HAP-1 (cell line): ENCODE measurements at regions of chr22 and their contacts with region 1.

Region 1: DNA sequence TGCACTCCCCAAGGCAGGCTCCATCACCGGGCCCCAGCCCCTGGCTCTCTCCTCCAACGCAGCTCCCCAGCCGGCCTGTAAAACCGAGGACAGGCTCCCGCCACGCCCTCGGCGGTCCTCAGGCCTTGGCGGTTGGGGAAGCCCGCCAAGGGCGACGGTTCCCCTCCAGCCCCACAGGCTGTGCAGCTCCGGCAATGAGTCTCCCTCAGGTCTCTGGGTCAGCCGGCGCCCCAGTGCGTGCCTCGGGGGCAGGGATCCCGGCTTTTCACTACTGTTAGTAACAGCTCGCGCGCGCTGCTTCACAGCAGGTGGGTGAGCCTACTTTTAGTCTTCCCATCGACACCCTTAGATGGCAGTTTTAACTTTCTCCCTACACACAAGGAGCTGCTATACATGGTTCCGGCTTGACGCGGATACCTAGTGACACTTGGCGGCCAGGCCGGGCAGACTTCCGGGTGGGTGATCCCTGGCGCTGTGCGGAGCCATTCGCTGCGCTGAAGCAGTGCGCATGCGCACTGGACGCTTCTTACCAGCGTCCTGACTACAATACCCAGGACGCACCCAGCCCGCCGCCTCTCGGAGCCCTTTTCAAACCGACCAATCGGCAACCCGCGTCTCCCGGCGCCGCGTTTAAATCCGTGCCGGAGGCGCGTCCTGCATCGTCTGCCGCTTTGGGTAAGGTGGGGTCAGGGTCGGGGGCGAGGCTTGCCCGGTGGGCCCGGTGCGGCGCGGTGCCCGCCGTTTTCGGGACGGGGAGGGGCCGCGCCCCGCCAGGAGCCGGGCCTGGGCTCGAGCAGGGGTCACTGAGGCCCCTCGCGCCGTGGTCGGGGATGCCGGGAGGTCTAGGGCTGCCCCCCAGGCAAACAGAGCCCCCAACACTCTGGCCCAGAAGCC is at the start of gene GTSE1:
- DNase-seq: peak; percentile 96 to 98
- H3K4me3 ChIP-seq: peak within 1 kb of the TSS; percentile 82
- H3K4me1 ChIP-seq: peaks cover 23% of the 10 kb centered on the region
- H3K27me3 ChIP-seq: no peaks in the 10 kb centered on the region

Region 2: DNA sequence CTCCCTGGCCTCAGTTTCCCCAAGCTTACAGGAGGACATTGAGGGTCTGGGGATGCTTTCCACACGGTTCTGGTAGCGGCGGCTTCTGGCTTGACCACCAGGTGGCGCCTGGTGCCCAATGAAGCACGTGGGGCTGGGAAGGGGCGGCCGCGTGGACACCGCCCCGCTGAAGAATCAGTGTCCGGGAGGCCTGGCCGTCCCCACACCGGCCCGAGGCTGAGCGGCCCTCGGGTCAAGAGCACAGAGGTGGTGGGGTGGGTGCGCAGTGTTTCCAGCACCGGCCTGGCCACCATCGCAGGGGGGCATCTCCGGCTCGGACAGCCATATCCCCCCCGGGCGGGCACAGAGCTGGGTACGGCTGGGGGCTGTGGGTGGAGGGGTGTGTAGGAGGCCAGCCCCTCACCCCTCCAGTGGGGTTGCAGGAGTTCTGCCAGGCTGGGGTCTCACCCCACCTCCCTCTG is 174.0 kb before region 1 on chr22:
- in situ Hi-C with region 1: loop called (anchors 10 kb)
- DNase-seq: peak; percentile 33 to 88
- H3K4me3 ChIP-seq: no peak overlapping the region
- H3K4me1 ChIP-seq: no peaks in the 10 kb centered on the region
- H3K27me3 ChIP-seq: no peaks in the 10 kb centered on the region

Region 3: GRCh38 chr22:46471901-46472721 is 175.6 kb after region 1 on chr22:
- in situ Hi-C with region 1: no loop called
- DNase-seq: no peak
- H3K4me3 ChIP-seq: no peak overlapping the region
- H3K4me1 ChIP-seq: no peaks in the 10 kb centered on the region
- H3K27me3 ChIP-seq: no peaks in the 10 kb centered on the region